ENCODE measurements at regions of chr1 and their contacts with region 1.

Region 1: GRCh38 chr1:223133824-223134435 is 9.1 kb downstream of the TLR5 start:
- DNase-seq: peak; percentile 91
- H3K4me3 ChIP-seq: peak overlapping the region; percentile 40
- H3K27ac ChIP-seq: no peak overlapping the region
- H3K4me1 ChIP-seq: peaks cover 19% of the 10 kb centered on the region
- H3K27me3 ChIP-seq: no peaks in the 10 kb centered on the region
- CTCF ChIP-seq: peak; percentile 97

Region 2: GRCh38 chr1:221911714-221912113 is 1222.2 kb before region 1 on chr1:
- CTCF ChIA-PET with region 1: no interaction called
- POLR2A ChIA-PET with region 1: no interaction called
- intact Hi-C with region 1: no loop called
- DNase-seq: no peak
- H3K4me3 ChIP-seq: no peak overlapping the region
- H3K27ac ChIP-seq: no peak overlapping the region
- H3K4me1 ChIP-seq: no peaks in the 10 kb centered on the region
- H3K27me3 ChIP-seq: no peaks in the 10 kb centered on the region
- CTCF ChIP-seq: no peak

Region 3: GRCh38 chr1:222465211-222466041 is 668.5 kb before region 1 on chr1:
- CTCF ChIA-PET with region 1: no interaction called
- POLR2A ChIA-PET with region 1: no interaction called
- intact Hi-C with region 1: loop called (anchors 10 kb)
- DNase-seq: peak; percentile 91
- H3K4me3 ChIP-seq: peak overlapping the region; percentile 55
- H3K27ac ChIP-seq: peak overlapping the region; percentile 64
- H3K4me1 ChIP-seq: no peaks in the 10 kb centered on the region
- H3K27me3 ChIP-seq: no peaks in the 10 kb centered on the region
- CTCF ChIP-seq: peak; percentile 91

Region 4: DNA sequence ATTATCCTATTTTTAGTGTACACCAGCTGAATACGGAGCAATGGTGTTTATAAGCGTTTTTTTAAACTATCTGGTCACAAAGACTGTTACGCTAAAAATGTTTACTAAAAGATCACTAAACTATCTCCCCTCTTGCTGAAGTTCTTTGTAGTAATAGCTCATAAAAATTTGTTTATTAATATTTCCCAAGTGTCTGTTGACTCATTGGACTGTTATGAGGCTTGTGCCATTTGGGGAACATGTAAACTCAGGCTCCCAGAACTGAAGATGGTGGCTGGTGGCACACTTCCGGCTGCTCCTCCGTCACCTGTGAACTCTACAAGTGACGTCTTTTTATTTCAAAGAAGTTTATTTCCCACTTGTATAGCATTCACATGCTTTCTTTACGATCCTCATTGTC is 468.0 kb before region 1 on chr1:
- CTCF ChIA-PET with region 1: no interaction called
- POLR2A ChIA-PET with region 1: no interaction called
- intact Hi-C with region 1: no loop called
- DNase-seq: no peak
- H3K4me3 ChIP-seq: no peak overlapping the region
- H3K27ac ChIP-seq: no peak overlapping the region
- H3K4me1 ChIP-seq: no peaks in the 10 kb centered on the region
- H3K27me3 ChIP-seq: no peaks in the 10 kb centered on the region
- CTCF ChIP-seq: no peak

Region 5: GRCh38 chr1:223123011-223123610 is 10.8 kb before region 1 on chr1:
- CTCF ChIA-PET with region 1: interaction called, 14 read pairs
- POLR2A ChIA-PET with region 1: no interaction called
- intact Hi-C with region 1: no loop called
- DNase-seq: no peak
- H3K4me3 ChIP-seq: no peak overlapping the region
- H3K27ac ChIP-seq: no peak overlapping the region
- H3K4me1 ChIP-seq: no peaks in the 10 kb centered on the region
- H3K27me3 ChIP-seq: no peaks in the 10 kb centered on the region
- CTCF ChIP-seq: no peak

Region 6: DNA sequence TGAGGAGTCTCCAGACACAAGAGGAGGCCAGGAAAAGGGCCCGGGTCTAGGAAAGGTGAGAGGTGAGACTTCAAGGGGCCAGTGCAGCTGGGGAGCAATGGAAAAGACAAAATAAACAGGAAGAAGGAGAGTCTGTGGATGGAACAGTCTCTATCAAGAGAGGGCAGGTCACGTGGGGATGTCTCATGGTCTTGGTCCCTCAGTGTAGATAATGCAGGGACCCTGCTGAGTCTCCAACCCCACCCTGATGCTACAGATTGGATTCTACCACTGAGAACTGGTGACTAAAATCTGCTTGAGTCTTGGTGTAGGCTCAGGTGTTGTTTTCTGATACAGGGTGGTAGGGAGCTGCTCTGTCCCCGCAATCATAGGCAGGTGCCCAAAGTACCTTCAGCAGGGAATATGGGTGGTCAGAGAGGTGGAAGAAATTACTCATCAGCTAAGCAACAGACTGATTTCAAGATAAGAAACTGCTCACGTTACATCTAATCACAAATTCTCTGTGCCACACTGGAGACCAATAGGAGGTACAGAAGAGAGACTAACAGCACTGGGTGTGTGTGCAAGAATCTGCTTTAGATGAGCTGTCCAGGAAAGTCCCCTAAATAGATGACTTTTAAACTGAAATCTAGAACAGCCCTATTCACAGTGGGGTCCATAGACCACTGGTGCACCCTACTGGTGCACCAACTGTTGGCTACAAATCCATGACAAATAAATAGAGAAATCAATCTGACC is 110.6 kb after region 1 on chr1:
- CTCF ChIA-PET with region 1: interaction called, 5 read pairs
- POLR2A ChIA-PET with region 1: no interaction called
- intact Hi-C with region 1: loop called (anchors 5 kb)
- DNase-seq: peak; percentile 17
- H3K4me3 ChIP-seq: no peak overlapping the region
- H3K27ac ChIP-seq: no peak overlapping the region
- H3K4me1 ChIP-seq: no peaks in the 10 kb centered on the region
- H3K27me3 ChIP-seq: no peaks in the 10 kb centered on the region
- CTCF ChIP-seq: peak; percentile 33; the same call in 1 of the 2 replicates

Region 7: DNA sequence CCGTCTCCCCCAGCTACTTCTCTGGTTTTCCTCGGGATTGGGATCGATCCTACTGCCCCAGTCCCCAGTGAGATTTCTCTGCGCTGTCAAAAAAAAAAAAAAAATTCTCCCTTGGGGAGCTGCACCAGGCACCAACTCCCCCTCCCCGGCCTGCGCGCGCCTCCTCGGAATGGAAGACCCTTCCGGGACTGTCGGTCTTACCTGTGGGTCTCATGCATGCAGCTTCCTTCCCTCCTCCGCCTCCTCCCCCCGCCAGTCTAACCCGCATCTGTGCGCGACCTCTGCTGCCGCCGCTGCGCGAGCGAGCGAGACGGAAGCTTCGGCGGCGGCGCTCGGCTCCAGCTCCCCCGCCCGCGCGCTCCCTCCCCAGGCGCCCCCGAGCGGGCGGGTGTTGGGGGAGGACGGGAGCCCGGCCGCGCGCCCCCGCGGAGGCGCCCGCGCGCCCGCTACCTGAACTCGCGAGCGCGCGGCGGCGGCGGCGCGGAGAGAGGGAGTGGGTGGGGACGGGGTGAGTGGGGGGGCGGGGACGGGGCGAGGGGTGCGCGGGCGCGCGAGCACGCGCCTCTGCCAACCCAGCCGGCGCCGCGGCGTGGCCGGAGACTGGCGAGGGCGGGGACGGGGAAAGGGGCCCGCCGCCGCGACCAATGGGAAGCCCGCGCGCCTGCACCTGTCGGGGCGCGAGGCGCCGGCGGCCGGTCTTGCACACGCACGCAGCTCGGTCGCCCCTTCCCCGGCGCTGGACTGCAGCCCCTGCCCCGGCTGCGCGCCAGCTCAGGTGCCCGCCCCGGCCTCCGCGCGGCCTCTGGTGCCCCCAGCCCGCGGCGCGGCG is 230.1 kb after region 1 on chr1 and contains the start of gene SUSD4:
- CTCF ChIA-PET with region 1: interaction called, 4 read pairs
- POLR2A ChIA-PET with region 1: no interaction called
- intact Hi-C with region 1: loop called (anchors 10 kb)
- DNase-seq: peak; percentile 52
- H3K4me3 ChIP-seq: peak within 1 kb of the TSS; percentile 48
- H3K27ac ChIP-seq: no peak within 1 kb of the TSS
- H3K4me1 ChIP-seq: peaks cover 15% of the 10 kb centered on the region
- H3K27me3 ChIP-seq: peaks cover 67% of the 10 kb centered on the region
- CTCF ChIP-seq: no peak
- total RNA-seq, gene SUSD4: not detected in 2 replicates

Region 8: DNA sequence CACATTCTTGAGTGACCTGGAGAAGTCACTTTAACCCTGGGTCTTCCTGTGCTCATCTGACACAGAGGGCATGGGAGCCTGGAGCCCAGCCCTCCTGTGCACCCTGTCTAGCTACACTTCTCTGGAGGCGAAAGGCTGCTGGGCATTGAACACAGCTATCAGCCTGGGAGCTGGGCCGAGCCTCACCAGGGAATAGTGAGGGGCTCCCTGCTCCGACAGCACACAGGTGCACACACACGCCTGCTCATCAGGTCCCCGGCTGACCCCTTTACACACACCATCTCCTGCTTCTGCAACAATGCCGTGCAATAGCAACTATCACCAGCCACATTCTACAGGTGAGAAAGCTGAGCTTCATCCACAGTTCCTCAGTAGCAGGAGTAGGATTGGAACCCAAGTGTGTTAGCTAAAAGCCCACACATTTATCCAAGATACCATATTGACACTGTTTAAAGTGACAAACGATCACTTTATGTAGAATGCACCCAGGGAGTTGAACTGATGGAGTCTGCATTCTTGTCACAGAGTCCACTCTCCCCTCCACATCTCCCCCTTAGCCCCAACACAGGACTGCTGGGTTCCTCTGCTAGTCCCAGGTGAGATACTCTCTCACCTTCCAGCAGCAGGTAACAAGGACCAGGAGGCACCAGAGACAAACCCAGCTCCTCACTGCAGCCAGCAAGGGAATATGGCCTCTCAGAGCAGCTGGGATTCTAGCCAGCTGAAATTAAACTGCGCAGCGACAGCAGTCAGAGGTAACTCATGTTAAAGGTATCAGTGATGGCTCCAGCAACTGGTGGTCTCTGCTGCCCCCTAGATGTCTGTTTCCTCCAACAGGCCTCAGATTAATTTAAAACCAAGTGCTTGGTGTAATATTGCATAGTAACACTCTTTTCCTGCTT is 549.9 kb after region 1 on chr1:
- CTCF ChIA-PET with region 1: interaction called, 14 read pairs
- POLR2A ChIA-PET with region 1: no interaction called
- intact Hi-C with region 1: loop called (anchors 1 kb)
- DNase-seq: peak; percentile 69
- H3K4me3 ChIP-seq: no peak overlapping the region
- H3K27ac ChIP-seq: no peak overlapping the region
- H3K4me1 ChIP-seq: no peaks in the 10 kb centered on the region
- H3K27me3 ChIP-seq: peaks cover 6% of the 10 kb centered on the region
- CTCF ChIP-seq: peak; percentile 78

Measured in A673 (cell line).